Activated CD4-positive, alpha-beta memory T cell treated with anti-CD3 and anti-CD28 coated beads for 36 hours (primary cell): ENCODE measurements at regions of chr20 and their contacts with region 1.

Region 1: DNA sequence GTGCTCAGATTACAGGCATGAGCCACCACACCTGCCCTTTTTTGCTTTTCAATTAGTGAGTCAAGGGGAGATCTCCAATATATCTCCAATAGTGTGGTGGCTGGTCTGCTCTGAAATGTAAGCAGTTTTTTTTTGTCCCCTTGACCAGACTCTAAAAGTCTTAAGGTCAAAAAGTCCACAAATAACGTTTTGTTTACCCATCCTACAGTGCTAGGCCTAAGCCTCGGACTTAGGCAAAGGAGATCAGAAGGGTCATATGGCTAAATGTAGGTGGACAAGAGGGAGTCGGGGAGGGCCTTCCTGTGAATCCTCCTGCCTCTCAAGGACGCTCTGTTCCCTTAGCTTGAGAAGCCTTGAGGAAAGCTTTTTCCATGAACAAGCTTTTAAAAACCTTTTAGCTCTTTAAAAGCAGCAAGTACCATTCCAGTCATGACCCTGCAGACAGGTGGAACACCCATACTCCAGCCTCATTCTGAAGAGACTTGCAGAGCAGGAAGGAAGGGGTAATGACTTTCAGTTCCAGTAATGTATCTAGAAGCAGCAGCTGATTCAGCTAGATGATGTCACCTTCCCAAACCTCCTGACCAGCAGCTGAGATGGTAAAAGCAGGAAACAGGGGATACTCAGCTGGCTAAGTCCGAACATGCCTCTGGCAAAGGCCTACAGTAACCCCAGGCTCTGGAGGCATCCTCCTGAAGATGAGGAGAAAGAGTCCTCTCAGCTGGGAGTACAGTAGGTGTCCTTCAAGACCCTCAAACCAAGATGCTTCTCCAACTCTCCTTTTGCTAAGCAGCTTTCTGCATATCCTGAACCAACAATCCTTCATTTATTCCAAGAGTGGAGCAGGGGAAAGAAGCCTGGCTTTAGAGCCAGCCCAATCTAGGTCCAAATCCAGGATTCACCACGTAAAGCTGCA is 23.6 kb downstream of the BCL2L1 start:
- DNase-seq: peak; percentile 55
- H3K4me3 Mint-ChIP-seq: peak overlapping the region; percentile 29
- H3K27ac Mint-ChIP-seq: peak overlapping the region; percentile 91
- H3K4me1 Mint-ChIP-seq: peaks cover 64% of the 10 kb centered on the region
- H3K27me3 Mint-ChIP-seq: no peaks in the 10 kb centered on the region

Region 2: GRCh38 chr20:31630187-31630790 is 68.8 kb before region 1 on chr20:
- CTCF ChIA-PET with region 1: interaction called, 12 read pairs
- POLR2A ChIA-PET with region 1: no interaction called
- intact Hi-C with region 1: no loop called
- DNase-seq: peak; percentile 25
- H3K4me3 Mint-ChIP-seq: no peak overlapping the region
- H3K27ac Mint-ChIP-seq: no peak overlapping the region
- H3K4me1 Mint-ChIP-seq: peaks cover 3% of the 10 kb centered on the region
- H3K27me3 Mint-ChIP-seq: no peaks in the 10 kb centered on the region

Region 3: DNA sequence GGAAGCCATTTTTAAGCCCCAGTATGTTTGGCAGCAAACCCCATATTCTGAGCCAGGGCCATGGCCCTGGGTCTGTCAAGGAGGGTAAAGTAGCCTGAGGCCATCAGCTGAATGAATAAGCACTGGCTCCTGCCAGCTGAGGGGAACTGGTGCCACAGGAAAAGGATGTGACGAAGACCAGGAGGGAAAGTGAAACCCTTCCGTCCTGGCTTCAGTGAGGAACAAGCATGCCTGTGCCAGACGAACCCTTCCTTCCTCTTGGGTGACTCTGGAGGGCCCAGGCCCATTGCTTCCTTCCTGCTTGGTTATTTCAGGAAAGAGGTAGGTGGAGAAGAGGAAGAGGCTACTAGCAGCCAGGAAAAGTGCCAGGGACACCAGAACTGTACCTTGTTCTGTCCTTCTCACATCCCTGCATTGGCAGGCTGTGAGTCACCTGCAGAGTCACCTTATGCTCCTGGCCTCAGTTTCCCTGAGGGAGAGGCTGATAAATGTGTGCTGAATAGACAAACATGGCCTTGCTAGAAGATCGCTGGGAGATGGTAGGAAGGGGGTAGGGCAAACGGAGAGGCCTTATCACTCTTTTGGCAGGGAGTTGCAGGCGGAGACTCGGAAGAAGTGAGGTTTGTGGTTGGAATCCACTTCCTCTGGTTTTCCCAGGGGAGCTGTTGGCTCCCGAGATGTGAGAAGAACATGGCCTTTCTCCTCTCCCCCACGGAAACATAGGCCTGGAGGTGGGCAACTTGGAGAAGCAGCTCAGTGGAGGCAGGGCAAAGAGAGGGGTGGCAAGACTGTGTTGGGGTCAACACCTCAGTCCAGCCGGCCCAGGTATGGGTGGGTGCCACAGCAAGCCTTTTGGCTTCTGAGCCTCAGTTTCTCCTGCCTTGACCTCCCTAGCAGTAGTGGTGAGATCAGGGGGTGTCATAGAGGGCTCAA is 23.9 kb before region 1 on chr20:
- CTCF ChIA-PET with region 1: interaction called, 4 read pairs
- POLR2A ChIA-PET with region 1: interaction called, 6 read pairs
- intact Hi-C with region 1: loop called (anchors 1 kb)
- DNase-seq: peak; percentile 86
- H3K4me3 Mint-ChIP-seq: peak overlapping the region; percentile 78
- H3K27ac Mint-ChIP-seq: peak overlapping the region; percentile 92
- H3K4me1 Mint-ChIP-seq: peaks cover 76% of the 10 kb centered on the region
- H3K27me3 Mint-ChIP-seq: no peaks in the 10 kb centered on the region

Region 4: DNA sequence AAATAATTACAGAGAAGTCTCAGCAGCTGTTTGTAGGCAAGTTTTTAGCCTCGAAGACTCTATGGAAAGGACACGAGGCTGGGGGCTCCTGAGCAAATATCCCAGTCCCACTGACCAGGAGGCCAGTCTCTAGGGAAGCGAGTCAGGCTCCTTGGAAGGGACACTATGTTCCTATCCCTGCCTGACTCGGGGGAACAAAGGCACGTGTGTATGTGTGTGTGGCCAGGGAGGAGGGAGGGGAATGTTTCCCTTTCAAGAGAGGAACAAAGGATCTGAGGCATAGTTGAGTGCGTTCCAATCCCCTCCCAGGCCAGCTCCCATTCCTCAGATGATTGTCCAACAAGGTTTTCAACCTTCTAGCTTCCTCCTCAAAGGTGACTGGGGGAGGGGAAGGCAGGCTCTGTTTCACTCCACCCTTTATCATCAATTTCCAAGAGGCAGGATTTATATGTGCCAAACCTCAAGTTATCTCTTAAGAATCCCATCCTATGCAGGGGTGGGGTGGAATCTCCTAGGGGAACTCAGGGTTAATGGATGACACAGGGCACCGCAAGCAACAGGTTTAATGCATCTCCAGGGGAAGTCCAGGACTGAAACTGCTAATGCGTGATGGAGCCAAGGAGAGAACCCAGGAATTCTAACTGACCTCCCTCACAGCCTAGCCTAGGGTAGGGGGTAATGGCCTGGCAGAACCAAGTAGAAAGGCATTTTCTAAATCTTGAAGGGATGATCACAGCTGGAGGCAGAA is 13.7 kb after region 1 on chr20:
- CTCF ChIA-PET with region 1: no interaction called
- POLR2A ChIA-PET with region 1: interaction called, 7 read pairs
- intact Hi-C with region 1: loop called (anchors 1 kb)
- DNase-seq: no peak
- H3K4me3 Mint-ChIP-seq: peak overlapping the region; percentile 24
- H3K27ac Mint-ChIP-seq: peak overlapping the region; percentile 88
- H3K4me1 Mint-ChIP-seq: peaks cover 93% of the 10 kb centered on the region
- H3K27me3 Mint-ChIP-seq: no peaks in the 10 kb centered on the region